Activated CD8-positive, alpha-beta T cell treated with anti-CD3 and anti-CD28 coated beads, Interleukin-2, amount 10 ng/mL, durations not matched to agents 7 days and 5 days (primary cell): ENCODE measurements at regions of chr2 and their contacts with region 1.

Region 1: GRCh38 chr2:219402665-219403515 is 15.2 kb upstream of the DNPEP start:
- DNase-seq: peak; percentile 76
- ATAC-seq: peak; percentile 90
- H3K4me3 Mint-ChIP-seq: no peak overlapping the region
- H3K27ac Mint-ChIP-seq: no peak overlapping the region
- H3K4me1 Mint-ChIP-seq: no peaks in the 10 kb centered on the region
- H3K27me3 Mint-ChIP-seq: peaks cover 4% of the 10 kb centered on the region

Region 2: DNA sequence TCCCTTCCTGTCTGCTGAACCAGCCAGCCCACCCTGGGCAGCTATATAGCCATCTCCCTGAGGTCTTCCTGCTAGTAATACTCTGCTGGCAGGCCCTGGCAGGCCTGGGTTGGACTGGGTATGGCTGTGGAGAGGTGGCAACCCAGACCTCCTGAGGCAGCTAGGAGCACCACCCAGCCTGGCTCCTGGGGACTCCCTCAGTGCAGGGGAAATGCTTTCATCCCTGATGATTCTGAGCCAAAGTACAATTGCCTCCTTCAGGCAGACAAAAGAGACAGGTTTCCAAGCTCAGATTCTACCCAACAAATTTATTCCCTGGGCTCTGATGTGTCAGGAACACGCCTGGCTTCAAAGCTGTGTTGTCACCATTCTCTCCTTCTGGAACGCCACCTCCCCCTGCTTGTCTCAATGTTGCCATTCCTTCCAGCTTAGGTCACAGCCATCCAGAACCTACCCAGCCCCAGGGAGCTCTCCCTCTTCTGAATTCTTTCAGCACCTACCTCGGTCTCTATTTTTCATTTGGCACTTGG is 128.4 kb before region 1 on chr2:
- CTCF ChIA-PET with region 1: no interaction called
- POLR2A ChIA-PET with region 1: no interaction called
- DNase-seq: no peak
- ATAC-seq: no peak
- H3K4me3 Mint-ChIP-seq: no peak overlapping the region
- H3K27ac Mint-ChIP-seq: no peak overlapping the region
- H3K4me1 Mint-ChIP-seq: peaks cover 18% of the 10 kb centered on the region
- H3K27me3 Mint-ChIP-seq: peaks cover 7% of the 10 kb centered on the region

Region 3: GRCh38 chr2:219388127-219388844 is 14.6 kb before region 1 on chr2:
- CTCF ChIA-PET with region 1: interaction called, 56 read pairs
- POLR2A ChIA-PET with region 1: interaction called, 5 read pairs
- DNase-seq: peak; percentile 99
- ATAC-seq: peak; percentile 77
- H3K4me3 Mint-ChIP-seq: peak overlapping the region; percentile 70
- H3K27ac Mint-ChIP-seq: peak overlapping the region; percentile 87
- H3K4me1 Mint-ChIP-seq: peaks cover 18% of the 10 kb centered on the region
- H3K27me3 Mint-ChIP-seq: peaks cover 5% of the 10 kb centered on the region

Region 4: GRCh38 chr2:219418570-219419189 is 15.8 kb after region 1 on chr2:
- CTCF ChIA-PET with region 1: interaction called, 10 read pairs
- POLR2A ChIA-PET with region 1: no interaction called
- DNase-seq: no peak
- ATAC-seq: peak; percentile 10
- H3K4me3 Mint-ChIP-seq: no peak overlapping the region
- H3K27ac Mint-ChIP-seq: no peak overlapping the region
- H3K4me1 Mint-ChIP-seq: no peaks in the 10 kb centered on the region
- H3K27me3 Mint-ChIP-seq: peaks cover 40% of the 10 kb centered on the region

Region 5: DNA sequence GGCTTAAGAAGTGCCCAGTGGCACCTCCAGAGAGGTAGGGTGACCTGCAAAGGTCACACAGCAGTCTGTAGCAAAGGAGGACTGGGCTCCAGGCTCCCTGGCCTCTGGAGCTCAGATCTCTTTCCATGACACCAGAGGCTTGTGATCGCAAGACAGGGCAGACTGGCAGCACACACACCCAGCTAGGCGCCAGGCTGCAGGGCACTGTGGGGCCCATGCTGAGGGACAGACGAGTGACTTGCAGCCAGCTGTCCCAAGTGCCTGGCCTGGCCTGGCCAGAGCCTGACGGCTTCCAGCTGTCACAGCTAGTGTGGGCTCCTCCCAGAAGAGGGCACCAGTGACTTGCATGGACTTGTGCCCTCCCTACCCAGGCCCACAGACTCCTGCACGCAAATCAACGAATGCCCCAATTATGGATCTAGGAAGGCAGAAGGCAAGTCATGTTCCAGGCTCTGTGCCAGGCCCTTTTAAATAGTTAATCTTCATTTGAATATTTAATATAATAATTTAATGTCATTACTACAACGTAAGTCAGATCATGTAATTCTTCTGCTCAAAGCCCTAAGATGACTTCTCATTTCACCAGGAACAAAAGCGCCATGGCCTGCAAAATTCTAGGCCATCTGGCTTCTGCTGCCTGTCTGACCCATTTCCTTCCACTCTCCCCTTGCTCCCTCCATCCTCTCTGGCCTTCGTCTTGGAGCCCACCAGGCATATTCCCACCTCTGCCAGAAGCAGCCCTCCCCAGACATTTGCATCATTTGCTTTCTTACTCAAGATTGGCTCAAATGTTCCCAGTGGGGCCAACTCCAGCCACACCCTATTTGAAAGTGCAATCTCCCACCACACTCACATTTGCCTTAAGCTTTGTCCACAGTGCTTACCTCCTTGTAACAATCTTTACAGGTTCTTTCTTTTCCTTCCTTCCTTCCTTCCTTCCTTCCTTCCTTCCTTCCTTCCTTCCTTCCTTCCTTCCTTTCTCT is 28.0 kb after region 1 on chr2:
- CTCF ChIA-PET with region 1: interaction called, 25 read pairs
- POLR2A ChIA-PET with region 1: no interaction called
- DNase-seq: no peak
- ATAC-seq: peak; percentile 56
- H3K4me3 Mint-ChIP-seq: no peak overlapping the region
- H3K27ac Mint-ChIP-seq: no peak overlapping the region
- H3K4me1 Mint-ChIP-seq: peaks cover 2% of the 10 kb centered on the region
- H3K27me3 Mint-ChIP-seq: peaks cover 20% of the 10 kb centered on the region

Region 6: GRCh38 chr2:219453681-219454590 is 51.0 kb after region 1 on chr2:
- CTCF ChIA-PET with region 1: interaction called, 20 read pairs
- POLR2A ChIA-PET with region 1: no interaction called
- DNase-seq: no peak
- ATAC-seq: no peak
- H3K4me3 Mint-ChIP-seq: no peak overlapping the region
- H3K27ac Mint-ChIP-seq: no peak overlapping the region
- H3K4me1 Mint-ChIP-seq: peaks cover 77% of the 10 kb centered on the region
- H3K27me3 Mint-ChIP-seq: peaks cover 18% of the 10 kb centered on the region

Region 7: GRCh38 chr2:219459460-219460311 is 56.8 kb after region 1 on chr2:
- CTCF ChIA-PET with region 1: interaction called, 20 read pairs
- POLR2A ChIA-PET with region 1: no interaction called
- DNase-seq: peak; percentile 53
- ATAC-seq: peak; percentile 27
- H3K4me3 Mint-ChIP-seq: no peak overlapping the region
- H3K27ac Mint-ChIP-seq: peak overlapping the region; percentile 52
- H3K4me1 Mint-ChIP-seq: peaks cover 54% of the 10 kb centered on the region
- H3K27me3 Mint-ChIP-seq: no peaks in the 10 kb centered on the region